ENCODE measurements at regions of chr5 and their contacts with region 1.

Region 1: GRCh38 chr5:143002459-143003328 is 232.5 kb downstream of the ARHGAP26 start:
- DNase-seq: peak; percentile 23 to 45 (median 36)
- ATAC-seq: peak; percentile 88
- H3K4me3 ChIP-seq: no peak overlapping the region
- H3K27ac ChIP-seq: no peak overlapping the region
- H3K4me1 ChIP-seq: no peaks in the 10 kb centered on the region
- H3K27me3 ChIP-seq: peaks cover 2 to 4% of the 10 kb centered on the region in 2 experiments; a peak in 1 of 5 replicates
- CTCF ChIP-seq: peak; percentile 49 to 74 (median 68); a peak in 4 of 6 replicates
- EP300 ChIP-seq: no peak; the same call in 1 of the 2 replicates
- POLR2A ChIP-seq: no peak
- RAD21 ChIP-seq: peak; percentile 75 to 83

Region 2: DNA sequence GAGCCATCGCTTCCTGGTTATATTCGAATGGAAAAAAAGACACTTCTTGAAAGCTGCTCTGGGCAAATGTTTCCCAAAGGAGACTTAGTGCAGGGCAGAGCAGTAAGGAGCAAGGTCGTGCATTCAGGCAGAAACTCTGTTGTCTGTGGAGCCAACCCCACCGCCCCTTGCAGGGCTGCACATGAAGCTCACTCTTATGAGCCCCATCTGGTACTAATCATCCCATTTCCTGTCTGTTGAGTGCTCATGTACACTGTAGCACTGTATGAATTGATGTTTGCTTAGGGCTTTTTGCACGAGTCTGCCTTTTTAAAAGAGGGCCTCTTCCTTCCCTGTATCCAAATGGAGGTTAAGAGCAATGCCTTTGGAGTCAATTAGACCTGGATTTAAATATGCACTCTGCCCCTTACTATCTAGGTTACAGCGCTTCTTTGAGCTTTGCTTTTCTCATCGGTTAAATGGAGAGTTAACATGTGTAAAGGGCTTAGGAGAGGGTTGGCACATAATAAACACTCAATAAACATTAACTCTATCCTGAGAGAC is 834.7 kb after region 1 on chr5:
- CTCF ChIA-PET with region 1: no interaction called
- POLR2A ChIA-PET with region 1: no interaction called
- in situ Hi-C with region 1: loop called (anchors 10 kb)
- intact Hi-C with region 1: no loop called
- DNase-seq: no peak
- ATAC-seq: no peak
- H3K4me3 ChIP-seq: no peak overlapping the region
- H3K27ac ChIP-seq: no peak overlapping the region
- H3K4me1 ChIP-seq: no peaks in the 10 kb centered on the region
- H3K27me3 ChIP-seq: no peaks in the 10 kb centered on the region
- CTCF ChIP-seq: no peak
- EP300 ChIP-seq: no peak
- POLR2A ChIP-seq: no peak
- RAD21 ChIP-seq: no peak

Measured in K562 (cell line).